ENCODE measurements at regions of chr17 and their contacts with region 1.

Region 1: GRCh38 chr17:12020642-12021622 is at the start of gene MAP2K4:
- DNase-seq: peak; percentile 86
- H3K4me3 Mint-ChIP-seq: peak within 1 kb of the TSS; percentile 73
- H3K27ac Mint-ChIP-seq: peak within 1 kb of the TSS; percentile 66
- H3K4me1 Mint-ChIP-seq: peaks cover 29% of the 10 kb centered on the region
- H3K27me3 Mint-ChIP-seq: no peaks in the 10 kb centered on the region
- CTCF ChIP-seq: no peak
- total RNA-seq, gene MAP2K4: 29.2 and 42.3 TPM in 2 replicates

Region 2: DNA sequence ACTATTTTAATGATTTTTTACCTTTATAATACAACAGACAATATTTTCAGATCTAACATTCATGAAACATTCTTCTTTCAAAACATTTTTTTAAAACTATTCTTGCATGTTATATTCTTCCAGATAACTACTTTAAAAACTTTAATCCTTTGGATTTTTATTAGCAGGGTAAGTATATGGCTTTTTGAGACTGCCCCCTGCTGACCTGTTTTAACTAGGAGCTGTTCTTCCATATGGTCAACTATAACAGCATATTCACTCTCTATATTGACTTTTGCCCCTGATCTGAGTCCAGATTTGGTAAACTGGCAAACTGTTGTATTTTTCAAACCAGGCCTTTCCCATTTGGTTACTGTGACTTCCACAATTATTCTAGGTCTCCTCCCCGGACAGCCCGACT is 40.1 kb before region 1 on chr17:
- CTCF ChIA-PET with region 1: no interaction called
- POLR2A ChIA-PET with region 1: no interaction called
- intact Hi-C with region 1: no loop called
- DNase-seq: peak; percentile 38
- H3K4me3 Mint-ChIP-seq: no peak overlapping the region
- H3K27ac Mint-ChIP-seq: no peak overlapping the region
- H3K4me1 Mint-ChIP-seq: peaks cover 17% of the 10 kb centered on the region
- H3K27me3 Mint-ChIP-seq: no peaks in the 10 kb centered on the region
- CTCF ChIP-seq: peak; percentile 39

Region 3: GRCh38 chr17:12041316-12041715 is 20.4 kb after region 1 on chr17:
- CTCF ChIA-PET with region 1: interaction called, 3 read pairs
- POLR2A ChIA-PET with region 1: interaction called, 115 read pairs
- intact Hi-C with region 1: no loop called
- DNase-seq: peak; percentile 74
- H3K4me3 Mint-ChIP-seq: peak overlapping the region; percentile 55
- H3K27ac Mint-ChIP-seq: peak overlapping the region; percentile 87
- H3K4me1 Mint-ChIP-seq: peaks cover 43% of the 10 kb centered on the region
- H3K27me3 Mint-ChIP-seq: no peaks in the 10 kb centered on the region
- CTCF ChIP-seq: no peak

Region 4: GRCh38 chr17:12118617-12119016 is 97.7 kb after region 1 on chr17:
- CTCF ChIA-PET with region 1: interaction called, 3 read pairs
- POLR2A ChIA-PET with region 1: interaction called, 4 read pairs
- intact Hi-C with region 1: loop called (anchors 5 kb)
- DNase-seq: peak; percentile 32
- H3K4me3 Mint-ChIP-seq: no peak overlapping the region
- H3K27ac Mint-ChIP-seq: no peak overlapping the region
- H3K4me1 Mint-ChIP-seq: peaks cover 5% of the 10 kb centered on the region
- H3K27me3 Mint-ChIP-seq: no peaks in the 10 kb centered on the region
- CTCF ChIP-seq: no peak

Measured in MCF 10A (cell line).